ENCODE measurements at regions of chr17 and their contacts with region 1.

Region 1: DNA sequence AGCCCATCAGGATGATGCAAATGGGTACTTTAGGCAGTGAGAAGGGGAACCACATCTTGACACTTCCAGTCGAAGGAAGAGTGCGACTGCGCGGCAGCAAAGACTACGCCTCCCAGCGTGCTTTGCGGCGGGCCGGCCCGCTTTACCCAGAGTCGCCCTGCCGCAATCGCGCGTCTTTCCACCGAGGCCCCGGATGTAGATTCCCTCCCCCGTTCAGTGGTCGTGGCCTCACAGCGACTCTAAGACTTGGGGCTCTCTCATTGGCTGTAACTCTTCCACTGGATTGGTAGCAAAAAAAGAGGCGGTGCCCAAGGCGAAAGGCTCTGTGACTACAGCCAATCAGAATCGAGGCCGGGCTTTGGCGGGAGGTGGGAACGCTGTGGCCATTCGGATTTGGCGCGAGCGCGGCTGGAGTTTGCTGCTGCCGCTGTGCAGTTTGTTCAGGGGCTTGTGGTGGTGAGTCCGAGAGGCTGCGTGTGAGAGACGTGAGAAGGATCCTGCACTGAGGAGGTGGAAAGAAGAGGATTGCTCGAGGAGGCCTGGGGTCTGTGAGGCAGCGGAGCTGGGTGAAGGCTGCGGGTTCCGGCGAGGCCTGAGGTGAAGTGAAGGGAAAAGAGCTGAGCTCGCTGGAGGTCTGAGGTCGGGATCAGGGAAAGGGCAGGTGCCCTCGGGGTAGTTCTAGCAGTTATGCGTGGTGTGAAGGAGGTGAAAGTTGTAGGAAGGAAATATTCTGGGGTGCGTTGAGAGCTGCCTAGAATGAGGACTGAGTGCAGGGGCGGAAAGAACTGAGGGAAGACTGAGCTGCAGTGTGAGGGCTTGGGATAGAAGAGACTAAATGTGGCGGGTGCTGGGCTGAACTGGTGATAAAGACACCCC is at the start of gene CDC6:
- DNase-seq: peak; percentile 95 to 99
- ATAC-seq: peak; percentile 91 to 98 (median 93)
- H3K4me3 ChIP-seq: peak within 1 kb of the TSS; percentile 56
- H3K4me3 Mint-ChIP-seq: peak within 1 kb of the TSS; percentile 100
- H3K27ac ChIP-seq: peak within 1 kb of the TSS; percentile 19
- H3K27ac Mint-ChIP-seq: peak within 1 kb of the TSS; percentile 84 to 86
- H3K4me1 ChIP-seq: peaks cover 12% of the 10 kb centered on the region
- H3K4me1 Mint-ChIP-seq: peaks cover 19 to 25% of the 10 kb centered on the region in 2 donors
- H3K27me3 ChIP-seq: no peaks in the 10 kb centered on the region
- H3K27me3 Mint-ChIP-seq: no peaks in the 10 kb centered on the region
- CTCF ChIP-seq: no peak
- total RNA-seq, gene CDC6: 3.4 to 4.9 (median 3.8) TPM

Region 2: GRCh38 chr17:40018211-40019121 is 269.3 kb before region 1 on chr17:
- intact Hi-C with region 1: loop called (anchors 1 kb)
- DNase-seq: no peak
- ATAC-seq: no peak
- H3K4me3 ChIP-seq: no peak overlapping the region
- H3K4me3 Mint-ChIP-seq: no peak overlapping the region
- H3K27ac ChIP-seq: no peak overlapping the region
- H3K27ac Mint-ChIP-seq: peak overlapping the region; percentile 41 to 47
- H3K4me1 ChIP-seq: peaks cover 19% of the 10 kb centered on the region
- H3K4me1 Mint-ChIP-seq: peaks cover 0 to 18% of the 10 kb centered on the region in 2 donors
- H3K27me3 ChIP-seq: no peaks in the 10 kb centered on the region
- H3K27me3 Mint-ChIP-seq: no peaks in the 10 kb centered on the region
- CTCF ChIP-seq: no peak

Region 3: DNA sequence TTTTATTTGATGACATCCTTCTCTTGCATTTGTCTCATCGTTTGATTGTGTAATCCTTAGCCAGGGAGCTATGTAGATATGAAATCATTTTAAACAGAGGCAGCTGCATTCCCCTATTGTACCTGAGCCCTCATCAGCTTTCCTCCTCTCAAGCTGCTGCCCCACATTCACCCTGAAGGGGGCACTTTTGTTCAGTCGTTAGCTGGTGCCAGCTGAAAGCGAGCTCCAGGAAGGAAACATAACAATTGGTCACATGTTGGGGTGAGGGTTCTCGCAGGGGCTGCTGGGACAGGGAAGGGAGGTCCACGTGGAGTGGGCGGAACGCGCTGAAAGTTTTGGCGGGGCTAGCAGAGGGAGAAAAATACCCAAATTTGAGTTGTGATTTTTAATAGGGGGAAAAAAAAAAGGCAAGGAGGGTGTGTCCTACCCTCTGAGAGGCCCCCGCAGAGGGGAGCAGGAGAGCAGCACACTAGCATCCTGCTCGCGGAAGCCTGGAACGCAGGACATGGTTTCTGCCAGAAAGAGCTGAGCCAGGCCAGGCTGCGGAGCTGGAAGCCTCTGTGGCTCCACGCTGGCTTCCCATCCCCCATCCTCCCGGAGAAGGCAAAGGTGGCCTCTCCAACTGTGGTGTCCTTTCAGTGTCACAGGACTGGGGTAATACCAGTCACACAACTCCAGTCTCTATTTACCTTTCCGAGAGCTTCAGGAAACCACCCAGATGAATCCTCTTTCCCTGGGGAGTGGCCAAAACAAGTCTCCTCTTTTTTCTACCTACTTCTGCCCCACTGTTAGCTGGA is 174.4 kb before region 1 on chr17:
- intact Hi-C with region 1: no loop called
- DNase-seq: peak; percentile 86 to 96
- ATAC-seq: peak; percentile 81 to 93 (median 88)
- H3K4me3 ChIP-seq: peak overlapping the region; percentile 46
- H3K4me3 Mint-ChIP-seq: peak overlapping the region; percentile 86
- H3K27ac ChIP-seq: peak overlapping the region; percentile 48
- H3K27ac Mint-ChIP-seq: peak overlapping the region; percentile 98 to 99
- H3K4me1 ChIP-seq: peaks cover 52% of the 10 kb centered on the region
- H3K4me1 Mint-ChIP-seq: peaks cover 46 to 49% of the 10 kb centered on the region in 2 donors
- H3K27me3 ChIP-seq: no peaks in the 10 kb centered on the region
- H3K27me3 Mint-ChIP-seq: no peaks in the 10 kb centered on the region
- CTCF ChIP-seq: peak; percentile 82

Region 4: GRCh38 chr17:40203131-40203530 is 84.6 kb before region 1 on chr17:
- intact Hi-C with region 1: loop called (anchors 1 kb)
- DNase-seq: no peak
- ATAC-seq: no peak
- H3K4me3 ChIP-seq: no peak overlapping the region
- H3K4me3 Mint-ChIP-seq: no peak overlapping the region
- H3K27ac ChIP-seq: no peak overlapping the region
- H3K27ac Mint-ChIP-seq: no peak overlapping the region
- H3K4me1 ChIP-seq: no peaks in the 10 kb centered on the region
- H3K4me1 Mint-ChIP-seq: no peaks in the 10 kb centered on the region
- H3K27me3 ChIP-seq: no peaks in the 10 kb centered on the region
- H3K27me3 Mint-ChIP-seq: peaks cover 0 to 6% of the 10 kb centered on the region in 2 donors
- CTCF ChIP-seq: no peak

Region 5: DNA sequence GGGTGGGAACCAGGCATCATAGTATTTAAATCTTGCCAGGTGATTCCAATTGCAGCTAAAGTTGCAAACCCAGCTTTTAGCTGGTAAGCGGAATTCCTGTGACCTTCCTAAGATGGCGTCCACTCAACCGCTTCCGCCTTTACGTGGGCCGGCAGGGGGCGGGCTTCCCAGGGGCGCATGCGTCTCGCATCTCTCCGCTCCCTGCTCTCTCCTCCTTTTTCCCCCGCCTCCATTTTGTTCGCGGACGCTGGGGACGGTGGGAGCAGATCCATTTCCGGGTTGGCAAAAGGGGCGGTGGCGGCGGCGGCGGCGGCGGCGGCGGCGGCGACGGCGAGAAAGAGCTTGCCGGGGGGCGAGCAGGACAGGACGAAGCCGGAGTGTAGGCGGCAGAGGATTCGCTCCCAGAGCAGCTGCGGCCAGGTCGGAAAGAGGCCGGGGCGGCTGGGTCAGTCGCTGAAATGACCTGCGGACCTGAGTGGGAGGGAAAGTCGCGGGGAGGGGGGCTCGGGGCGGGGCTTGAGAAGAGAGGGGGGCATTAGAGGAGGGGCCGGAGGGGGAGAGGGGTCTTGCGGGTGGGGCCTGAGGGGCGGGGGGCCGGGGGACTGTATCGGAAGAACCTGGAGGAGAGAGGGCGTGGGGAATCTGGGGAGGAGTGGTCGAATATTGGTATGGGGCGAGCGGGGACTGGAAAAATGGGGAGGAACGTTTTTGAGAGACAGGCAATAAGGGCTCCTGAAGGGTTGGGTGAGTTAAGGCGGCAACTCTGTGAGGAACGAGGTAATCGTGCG is 68.5 kb before region 1 on chr17 and contains the start of gene WIPF2:
- intact Hi-C with region 1: loop called (anchors 5 kb)
- DNase-seq: peak; percentile 97 to 98
- ATAC-seq: peak; percentile 92 to 98 (median 94)
- H3K4me3 ChIP-seq: peak within 1 kb of the TSS; percentile 80
- H3K4me3 Mint-ChIP-seq: peak within 1 kb of the TSS; percentile 88
- H3K27ac ChIP-seq: peak within 1 kb of the TSS; percentile 99
- H3K27ac Mint-ChIP-seq: peak within 1 kb of the TSS; percentile 99
- H3K4me1 ChIP-seq: peaks cover 28% of the 10 kb centered on the region
- H3K4me1 Mint-ChIP-seq: peaks cover 27 to 37% of the 10 kb centered on the region in 2 donors
- H3K27me3 ChIP-seq: no peaks in the 10 kb centered on the region
- H3K27me3 Mint-ChIP-seq: no peaks in the 10 kb centered on the region
- CTCF ChIP-seq: peak; percentile 56
- total RNA-seq, gene WIPF2: 43.2 to 47.4 (median 43.9) TPM

Region 6: GRCh38 chr17:40317880-40318829 is 30.4 kb after region 1 on chr17:
- intact Hi-C with region 1: loop called (anchors 2 kb)
- DNase-seq: peak; percentile 89 to 95
- ATAC-seq: peak; percentile 61 to 86 (median 71)
- H3K4me3 ChIP-seq: peak overlapping the region; percentile 79
- H3K4me3 Mint-ChIP-seq: peak overlapping the region; percentile 94
- H3K27ac ChIP-seq: peak overlapping the region; percentile 98
- H3K27ac Mint-ChIP-seq: peak overlapping the region; percentile 99
- H3K4me1 ChIP-seq: peaks cover 94% of the 10 kb centered on the region
- H3K4me1 Mint-ChIP-seq: peaks cover 78 to 95% of the 10 kb centered on the region in 2 donors
- H3K27me3 ChIP-seq: no peaks in the 10 kb centered on the region
- H3K27me3 Mint-ChIP-seq: no peaks in the 10 kb centered on the region
- CTCF ChIP-seq: no peak

Region 7: DNA sequence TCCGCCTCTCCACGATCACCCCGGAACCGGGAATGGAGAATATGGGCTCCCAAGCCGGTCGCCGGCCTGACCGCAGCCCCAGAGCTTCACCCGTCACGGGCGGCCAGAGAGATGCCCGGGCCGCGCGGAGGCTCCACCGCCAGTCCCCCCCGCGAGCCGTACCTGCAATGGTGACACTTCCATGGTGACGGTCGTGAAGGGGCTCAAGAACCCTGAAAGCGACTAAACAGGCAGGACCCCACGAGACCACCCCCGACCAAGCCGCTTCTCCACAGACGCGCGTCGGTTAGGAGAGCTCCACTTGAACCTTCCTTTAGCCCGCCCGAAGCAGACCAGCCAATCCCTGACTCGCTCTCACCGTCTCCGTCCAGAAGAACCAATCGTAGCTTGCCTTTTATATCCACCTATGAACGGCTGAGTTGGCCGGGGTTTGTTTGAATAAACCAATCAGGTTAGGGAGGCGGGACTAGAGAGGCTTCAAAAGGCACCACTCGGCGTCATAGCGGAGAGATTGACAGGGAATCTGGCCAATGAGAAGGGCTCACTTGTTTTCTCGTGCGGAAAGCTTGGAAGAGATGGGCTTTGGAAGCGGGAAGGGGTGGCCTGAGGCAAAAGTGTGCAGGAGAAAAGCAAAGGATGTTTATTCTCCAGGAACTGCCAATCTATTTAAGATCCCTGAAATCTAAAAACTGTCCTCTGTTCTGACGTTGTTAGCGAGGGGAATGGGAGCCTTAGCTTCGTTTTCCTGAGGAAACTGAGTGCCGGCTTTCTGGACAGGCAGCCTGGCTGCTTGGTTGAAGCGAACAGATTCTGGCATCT is 130.1 kb after region 1 on chr17 and contains the start of gene TOP2A:
- intact Hi-C with region 1: loop called (anchors 1 kb)
- DNase-seq: peak; percentile 97 to 99
- ATAC-seq: peak; percentile 99 to 100 (median 99)
- H3K4me3 ChIP-seq: peak within 1 kb of the TSS; percentile 71
- H3K4me3 Mint-ChIP-seq: peak within 1 kb of the TSS; percentile 96
- H3K27ac ChIP-seq: peak within 1 kb of the TSS; percentile 18
- H3K27ac Mint-ChIP-seq: peak within 1 kb of the TSS; percentile 75 to 78
- H3K4me1 ChIP-seq: peaks cover 16% of the 10 kb centered on the region
- H3K4me1 Mint-ChIP-seq: peaks cover 10 to 14% of the 10 kb centered on the region in 2 donors
- H3K27me3 ChIP-seq: no peaks in the 10 kb centered on the region
- H3K27me3 Mint-ChIP-seq: no peaks in the 10 kb centered on the region
- CTCF ChIP-seq: no peak
- total RNA-seq, gene TOP2A: 2.0 to 6.4 (median 4.6) TPM

Measured in natural killer cell (primary cell).